Activated B cell treated with CpG ODN at 0.5 μM for 24 hours (primary cell): ENCODE measurements at regions of chr19 and their contacts with region 1.

Region 1: GRCh38 chr19:13794757-13795589 is at the start of gene ZSWIM4:
- DNase-seq: peak; percentile 86
- ATAC-seq: peak; percentile 95
- H3K4me3 Mint-ChIP-seq: peak within 1 kb of the TSS; percentile 98
- H3K27ac Mint-ChIP-seq: peak within 1 kb of the TSS; percentile 91
- H3K4me1 Mint-ChIP-seq: peaks cover 32% of the 10 kb centered on the region
- H3K27me3 Mint-ChIP-seq: no peaks in the 10 kb centered on the region
- CTCF ChIP-seq: no peak
- total RNA-seq, gene ZSWIM4: 8.5 and 11.2 TPM in 2 replicates

Region 2: GRCh38 chr19:13548131-13548530 is 246.8 kb before region 1 on chr19:
- CTCF ChIA-PET with region 1: no interaction called
- POLR2A ChIA-PET with region 1: no interaction called
- intact Hi-C with region 1: no loop called
- DNase-seq: no peak
- ATAC-seq: no peak
- H3K4me3 Mint-ChIP-seq: no peak overlapping the region
- H3K27ac Mint-ChIP-seq: no peak overlapping the region
- H3K4me1 Mint-ChIP-seq: no peaks in the 10 kb centered on the region
- H3K27me3 Mint-ChIP-seq: peaks cover 17% of the 10 kb centered on the region
- CTCF ChIP-seq: no peak

Region 3: GRCh38 chr19:13764101-13764807 is 30.7 kb before region 1 on chr19 and contains the start of gene MRI1:
- CTCF ChIA-PET with region 1: interaction called, 3 read pairs
- POLR2A ChIA-PET with region 1: interaction called, 3 read pairs
- intact Hi-C with region 1: loop called (anchors 1 kb)
- DNase-seq: peak; percentile 70
- ATAC-seq: peak; percentile 84
- H3K4me3 Mint-ChIP-seq: peak within 1 kb of the TSS; percentile 86
- H3K27ac Mint-ChIP-seq: peak within 1 kb of the TSS; percentile 70
- H3K4me1 Mint-ChIP-seq: peaks cover 16% of the 10 kb centered on the region
- H3K27me3 Mint-ChIP-seq: no peaks in the 10 kb centered on the region
- CTCF ChIP-seq: no peak
- total RNA-seq, gene MRI1: 32.5 and 37.5 TPM in 2 replicates

Region 4: DNA sequence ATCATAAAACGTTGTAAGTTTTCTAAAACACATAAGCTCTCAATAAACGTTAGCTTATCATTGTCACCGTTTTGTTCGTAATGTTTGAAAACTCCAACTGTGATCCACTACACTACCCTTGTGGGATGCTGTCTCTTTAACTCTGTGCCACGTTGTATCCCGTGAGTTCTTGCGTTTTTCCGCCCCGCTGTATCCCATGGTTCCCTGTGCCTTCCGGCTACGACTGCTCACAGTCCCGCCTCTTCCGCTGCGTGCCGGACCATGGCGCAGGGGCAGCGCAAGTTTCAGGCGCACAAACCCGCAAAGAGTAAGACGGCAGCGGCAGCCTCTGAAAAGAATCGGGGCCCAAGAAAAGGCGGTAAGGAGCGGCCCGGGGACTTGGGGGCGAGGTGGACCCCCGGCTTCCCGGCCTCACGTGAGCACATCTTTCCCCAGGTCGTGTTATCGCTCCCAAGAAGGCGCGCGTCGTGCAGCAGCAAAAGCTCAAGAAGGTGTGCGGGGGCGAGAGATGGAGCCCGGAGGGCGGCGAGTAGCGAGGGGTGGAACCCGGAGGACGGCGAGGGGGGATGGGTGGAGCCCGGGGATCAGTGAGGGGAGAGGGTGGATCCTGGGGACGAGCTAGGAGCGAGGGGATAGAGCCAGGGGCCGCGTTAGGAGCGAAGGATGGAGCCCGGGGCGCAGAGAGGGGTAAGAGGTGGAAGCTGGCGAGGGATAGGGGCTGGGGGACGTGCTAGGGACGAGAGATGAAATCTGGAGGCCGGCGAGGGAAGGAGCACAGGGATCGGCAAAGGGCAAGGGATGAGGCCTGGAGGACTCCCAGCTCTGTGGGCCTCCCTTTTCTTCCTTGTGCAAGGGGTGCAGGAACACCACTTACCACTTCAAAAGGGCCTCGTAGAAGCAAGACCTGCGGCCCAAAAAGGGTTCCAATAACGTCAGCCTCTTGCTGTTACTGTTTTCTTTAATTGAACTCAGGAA is 20.5 kb before region 1 on chr19 and contains the start of gene C19orf53:
- CTCF ChIA-PET with region 1: no interaction called
- POLR2A ChIA-PET with region 1: interaction called, 29 read pairs
- intact Hi-C with region 1: loop called (anchors 1 kb)
- DNase-seq: peak; percentile 86
- ATAC-seq: peak; percentile 99
- H3K4me3 Mint-ChIP-seq: peak within 1 kb of the TSS; percentile 100
- H3K27ac Mint-ChIP-seq: peak within 1 kb of the TSS; percentile 95
- H3K4me1 Mint-ChIP-seq: peaks cover 26% of the 10 kb centered on the region
- H3K27me3 Mint-ChIP-seq: no peaks in the 10 kb centered on the region
- CTCF ChIP-seq: no peak
- total RNA-seq, gene C19orf53: 74.9 and 76.1 TPM in 2 replicates

Region 5: GRCh38 chr19:13833330-13834243 is 38.6 kb after region 1 on chr19:
- CTCF ChIA-PET with region 1: interaction called, 9 read pairs
- POLR2A ChIA-PET with region 1: interaction called, 25 read pairs
- intact Hi-C with region 1: loop called (anchors 1 kb)
- DNase-seq: peak; percentile 92
- ATAC-seq: peak; percentile 86
- H3K4me3 Mint-ChIP-seq: peak overlapping the region; percentile 90
- H3K27ac Mint-ChIP-seq: peak overlapping the region; percentile 86
- H3K4me1 Mint-ChIP-seq: peaks cover 45% of the 10 kb centered on the region
- H3K27me3 Mint-ChIP-seq: no peaks in the 10 kb centered on the region
- CTCF ChIP-seq: no peak

Region 6: DNA sequence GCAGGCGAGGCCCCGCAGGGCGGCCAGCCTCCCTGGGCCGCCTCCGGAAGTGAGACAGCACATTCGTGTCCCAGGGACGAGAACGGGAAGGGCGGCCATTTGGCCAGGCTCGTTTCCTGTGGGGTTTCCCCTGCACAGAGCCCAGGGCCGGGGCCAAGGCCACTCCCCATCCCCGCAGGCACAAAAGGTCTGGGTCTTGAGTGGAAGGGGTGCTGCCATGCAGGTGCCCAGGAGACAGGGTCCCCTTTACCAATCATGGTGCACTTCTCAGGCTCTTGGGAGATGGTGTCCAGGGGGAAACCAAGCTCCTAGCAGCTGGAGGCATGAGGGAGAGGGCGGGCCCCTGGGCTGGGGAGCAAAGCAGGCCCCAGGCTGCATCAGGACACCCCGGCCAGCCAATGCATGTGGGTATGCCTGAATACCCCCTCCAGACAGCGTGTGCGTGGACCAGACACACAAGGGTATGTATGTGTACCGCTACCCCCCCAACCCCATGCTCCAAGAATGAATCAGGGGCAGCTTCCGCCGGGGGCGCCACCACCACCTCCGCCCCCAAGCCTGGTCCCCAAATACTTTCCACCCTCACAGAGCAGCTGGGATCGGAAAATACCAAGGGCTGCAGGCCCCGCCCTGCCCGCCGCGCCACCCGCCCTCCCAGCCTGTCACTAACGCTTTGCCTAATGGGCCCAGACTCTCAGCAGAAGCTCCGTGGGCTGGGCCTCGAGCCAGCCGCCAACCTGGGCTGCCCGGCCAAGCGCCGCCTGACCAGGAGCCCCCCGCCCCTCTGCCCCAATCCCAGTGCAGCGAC is 44.4 kb after region 1 on chr19:
- CTCF ChIA-PET with region 1: interaction called, 9 read pairs
- POLR2A ChIA-PET with region 1: interaction called, 25 read pairs
- intact Hi-C with region 1: loop called (anchors 1 kb)
- DNase-seq: peak; percentile 70
- ATAC-seq: peak; percentile 45
- H3K4me3 Mint-ChIP-seq: peak overlapping the region; percentile 86
- H3K27ac Mint-ChIP-seq: peak overlapping the region; percentile 92
- H3K4me1 Mint-ChIP-seq: peaks cover 75% of the 10 kb centered on the region
- H3K27me3 Mint-ChIP-seq: no peaks in the 10 kb centered on the region
- CTCF ChIP-seq: no peak

Region 7: DNA sequence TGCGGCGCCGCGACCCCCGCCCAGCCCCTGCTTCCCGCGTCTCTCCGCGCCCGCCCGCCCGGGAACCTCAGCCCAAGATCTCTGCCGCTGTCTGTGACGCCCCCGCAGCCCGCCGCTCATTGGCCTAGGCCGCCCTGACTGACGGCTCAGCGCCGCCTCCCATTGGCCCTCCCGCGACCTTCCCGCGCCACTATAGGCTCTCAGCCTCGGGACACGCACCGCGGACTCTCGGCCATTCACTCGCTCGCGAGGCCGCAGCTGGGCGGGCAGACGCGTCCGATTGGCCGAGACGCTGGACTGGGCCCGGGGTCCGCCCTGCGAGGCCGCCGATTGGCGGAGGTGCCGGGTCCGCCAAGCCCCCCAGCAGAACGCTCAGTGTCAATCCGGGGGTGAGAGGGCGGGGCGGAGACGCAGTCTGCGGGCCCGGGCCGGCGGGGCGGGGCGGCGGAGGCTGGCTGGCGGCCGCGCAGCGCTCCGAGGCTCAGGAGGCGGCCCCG is 322.7 kb after region 1 on chr19 and contains the start of gene PRKACA:
- CTCF ChIA-PET with region 1: no interaction called
- POLR2A ChIA-PET with region 1: no interaction called
- intact Hi-C with region 1: loop called (anchors 10 kb)
- DNase-seq: peak; percentile 95
- ATAC-seq: peak; percentile 95
- H3K4me3 Mint-ChIP-seq: peak within 1 kb of the TSS; percentile 89
- H3K27ac Mint-ChIP-seq: peak within 1 kb of the TSS; percentile 68
- H3K4me1 Mint-ChIP-seq: peaks cover 42% of the 10 kb centered on the region
- H3K27me3 Mint-ChIP-seq: no peaks in the 10 kb centered on the region
- CTCF ChIP-seq: no peak
- total RNA-seq, gene PRKACA: 41.6 and 43.7 TPM in 2 replicates